Right ventricle myocardium superior (tissue), 1 donor: ENCODE measurements at regions of chr6 and their contacts with region 1.

Region 1: DNA sequence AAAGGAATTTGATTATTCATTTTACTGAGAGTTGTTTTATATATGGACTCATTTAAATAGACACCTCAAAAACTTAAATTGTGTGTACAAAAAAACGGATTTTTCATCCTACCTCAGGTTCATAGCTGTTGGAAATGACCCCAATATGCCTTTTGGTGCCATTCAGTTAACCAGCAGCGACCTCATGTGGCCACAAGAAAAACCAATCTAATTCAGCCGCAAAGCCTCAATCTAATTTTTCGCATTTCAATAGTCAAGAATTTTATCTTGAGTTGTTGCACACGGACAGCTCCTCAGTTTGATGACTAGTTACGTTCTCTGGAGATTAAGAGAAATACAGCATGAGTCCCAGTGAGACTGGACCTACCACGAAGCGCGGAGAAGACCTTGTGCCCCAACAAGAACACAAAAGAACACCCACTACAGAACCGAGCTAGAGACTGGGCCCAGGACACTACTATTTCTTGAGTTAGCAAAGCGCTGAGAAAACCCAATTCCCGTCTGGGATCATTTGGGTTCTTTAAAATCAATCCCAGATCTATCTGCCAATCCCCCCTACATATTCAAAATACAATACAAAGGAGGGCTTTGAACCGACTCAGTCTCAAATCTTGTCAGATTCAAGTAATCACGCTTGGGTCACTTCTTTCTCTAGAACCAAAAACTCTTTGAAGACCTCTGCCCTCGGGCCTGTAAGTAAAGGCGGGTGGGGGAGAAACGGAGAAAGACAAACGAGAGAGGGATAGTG is 1.1 kb downstream of the TCP11 start:
- DNase-seq: no peak
- ATAC-seq: peak; percentile 72

Region 2: DNA sequence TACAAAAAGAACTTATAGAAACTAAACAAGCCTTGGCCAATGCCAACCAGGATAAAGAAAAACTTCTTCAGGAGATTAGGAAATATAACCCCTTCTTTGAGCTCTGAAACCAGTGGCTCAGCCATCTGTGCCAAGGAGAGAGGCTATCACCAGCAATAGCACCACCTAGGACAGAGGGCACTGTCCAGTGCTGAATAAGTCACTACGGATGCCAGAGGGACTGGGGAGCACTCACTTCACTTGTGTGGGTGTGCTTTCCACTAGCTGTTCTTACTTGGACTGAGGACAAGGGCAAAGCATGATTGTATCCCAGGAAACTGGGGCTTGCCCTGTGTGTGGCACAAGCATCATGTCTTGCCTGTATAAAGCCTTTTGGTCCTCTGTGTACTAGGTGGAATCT is 267.8 kb before region 1 on chr6:
- intact Hi-C with region 1: loop called (anchors 10 kb)
- DNase-seq: no peak
- ATAC-seq: no peak

Region 3: GRCh38 chr6:34986845-34987246 is 153.2 kb before region 1 on chr6:
- intact Hi-C with region 1: loop called (anchors 2 kb)
- DNase-seq: peak; percentile 50
- ATAC-seq: peak; percentile 86